Endothelial cell of umbilical vein (primary cell): ENCODE measurements at regions of chr5 and their contacts with region 1.

Region 1: DNA sequence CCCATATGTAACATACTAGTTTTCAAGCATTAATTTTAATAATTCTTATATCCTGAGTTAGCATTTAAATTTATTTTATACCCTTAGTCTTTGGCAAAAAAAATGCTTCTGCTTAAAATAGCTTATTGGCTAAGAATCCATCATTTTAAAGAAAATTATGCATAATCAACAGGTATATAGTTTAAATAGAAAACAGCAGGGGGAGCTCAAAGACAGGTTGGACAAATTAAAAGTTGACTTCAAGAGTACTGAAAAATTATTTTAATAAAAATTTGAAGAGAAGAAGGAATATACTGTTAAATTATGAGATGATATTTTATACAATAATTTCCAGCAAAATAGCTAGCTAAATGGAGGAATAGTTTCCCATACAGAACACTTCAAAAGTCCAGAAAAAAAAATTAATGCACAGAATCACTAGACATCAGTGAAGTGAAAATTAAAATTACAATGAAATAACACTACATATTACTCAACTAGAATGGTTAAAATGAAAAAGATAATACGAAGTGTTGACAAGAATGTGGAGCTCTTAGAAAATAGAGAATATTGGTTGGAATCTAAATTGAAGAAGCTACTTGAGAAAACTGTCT is 387.1 kb downstream of the PDE4D start:
- DNase-seq: peak; percentile 39
- H3K4me3 ChIP-seq: no peak overlapping the region
- H3K27ac ChIP-seq: no peak overlapping the region
- H3K4me1 ChIP-seq: no peaks in the 10 kb centered on the region
- H3K27me3 ChIP-seq: peaks cover 0 to 4% of the 10 kb centered on the region in 2 experiments
- CTCF ChIP-seq: peak; percentile 2 to 6
- POLR2A ChIP-seq: no peak

Region 2: DNA sequence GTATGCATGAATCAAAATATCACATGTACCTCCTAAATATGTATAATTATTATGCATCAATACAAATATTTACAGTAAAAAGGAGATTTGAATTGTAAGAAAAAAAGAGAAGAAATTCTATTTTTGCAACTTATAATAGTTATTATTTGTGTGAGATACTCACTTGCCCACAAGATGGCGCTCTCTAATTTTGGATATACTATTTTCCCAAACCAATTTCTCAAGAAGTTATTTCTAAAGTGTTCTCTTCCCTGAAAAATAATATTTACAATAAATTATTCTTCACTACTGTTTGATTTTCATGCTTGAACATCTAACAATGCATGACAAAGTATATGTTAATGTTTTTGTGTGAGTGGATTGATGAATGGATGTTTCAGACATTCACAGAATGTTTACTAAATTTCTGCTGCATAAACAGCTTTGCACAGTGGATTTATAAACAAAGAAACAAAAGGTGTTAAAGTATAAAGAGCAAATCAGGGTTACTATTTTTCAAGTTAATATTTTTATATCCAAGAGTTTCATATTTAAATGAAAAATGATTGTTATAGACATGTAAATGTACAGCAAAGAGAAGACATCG is 116.2 kb before region 1 on chr5:
- CTCF ChIA-PET with region 1: interaction called, 12 read pairs
- POLR2A ChIA-PET with region 1: no interaction called
- dilution Hi-C with region 1: no loop called
- intact Hi-C with region 1: no loop called
- DNase-seq: peak; percentile 40
- H3K4me3 ChIP-seq: no peak overlapping the region
- H3K27ac ChIP-seq: no peak overlapping the region
- H3K4me1 ChIP-seq: no peaks in the 10 kb centered on the region
- H3K27me3 ChIP-seq: no peaks in the 10 kb centered on the region
- CTCF ChIP-seq: peak; percentile 26 to 33
- POLR2A ChIP-seq: no peak

Region 3: DNA sequence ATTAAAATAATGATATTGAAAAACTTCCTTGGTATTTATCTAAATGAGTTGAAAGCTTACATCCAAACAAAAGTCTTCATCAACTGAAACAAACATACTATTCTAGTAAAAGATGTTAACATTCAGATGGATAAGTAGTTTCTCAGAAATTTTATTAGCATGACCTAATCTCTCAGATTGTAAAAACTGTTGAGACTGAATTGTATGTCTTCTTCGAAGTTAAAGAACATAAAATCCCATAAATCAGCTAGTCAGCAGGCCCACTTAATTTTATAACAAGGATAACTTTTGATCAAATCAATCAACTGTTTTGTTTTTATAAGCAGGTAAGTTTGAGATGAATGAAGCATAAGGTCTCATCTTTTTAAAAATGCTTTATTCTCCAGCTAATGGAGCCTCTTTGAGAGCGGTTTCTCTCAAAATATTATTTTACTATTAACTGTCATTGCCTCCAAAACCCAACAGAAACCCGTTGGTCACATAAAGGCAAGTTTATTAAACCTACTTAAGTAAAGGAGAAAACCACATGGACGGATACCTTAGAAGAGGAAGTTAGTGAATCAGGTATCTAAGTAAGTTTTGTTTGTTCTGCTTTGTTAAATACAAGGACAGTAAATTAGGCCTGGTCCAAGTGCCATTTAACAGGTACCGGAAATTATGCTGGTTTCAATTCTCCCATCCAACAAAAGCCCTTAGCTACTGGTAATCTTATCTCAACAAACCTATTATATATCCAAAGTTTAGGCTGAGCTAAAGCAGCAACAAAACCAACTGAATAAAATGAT is 69.8 kb before region 1 on chr5:
- CTCF ChIA-PET with region 1: no interaction called
- POLR2A ChIA-PET with region 1: no interaction called
- dilution Hi-C with region 1: no loop called
- intact Hi-C with region 1: no loop called
- DNase-seq: no peak
- H3K4me3 ChIP-seq: no peak overlapping the region
- H3K27ac ChIP-seq: no peak overlapping the region
- H3K4me1 ChIP-seq: no peaks in the 10 kb centered on the region
- H3K27me3 ChIP-seq: no peaks in the 10 kb centered on the region
- CTCF ChIP-seq: no peak
- POLR2A ChIP-seq: no peak

Region 4: GRCh38 chr5:59517926-59518585 is 11.7 kb after region 1 on chr5:
- CTCF ChIA-PET with region 1: interaction called, 29 read pairs
- POLR2A ChIA-PET with region 1: no interaction called
- dilution Hi-C with region 1: no loop called
- intact Hi-C with region 1: no loop called
- DNase-seq: peak; percentile 75
- H3K4me3 ChIP-seq: peak overlapping the region in 1 of 3 experiments; percentile 39
- H3K27ac ChIP-seq: peak overlapping the region; percentile 78
- H3K4me1 ChIP-seq: peaks cover 29% of the 10 kb centered on the region
- H3K27me3 ChIP-seq: no peaks in the 10 kb centered on the region
- CTCF ChIP-seq: no peak
- POLR2A ChIP-seq: no peak

Region 5: DNA sequence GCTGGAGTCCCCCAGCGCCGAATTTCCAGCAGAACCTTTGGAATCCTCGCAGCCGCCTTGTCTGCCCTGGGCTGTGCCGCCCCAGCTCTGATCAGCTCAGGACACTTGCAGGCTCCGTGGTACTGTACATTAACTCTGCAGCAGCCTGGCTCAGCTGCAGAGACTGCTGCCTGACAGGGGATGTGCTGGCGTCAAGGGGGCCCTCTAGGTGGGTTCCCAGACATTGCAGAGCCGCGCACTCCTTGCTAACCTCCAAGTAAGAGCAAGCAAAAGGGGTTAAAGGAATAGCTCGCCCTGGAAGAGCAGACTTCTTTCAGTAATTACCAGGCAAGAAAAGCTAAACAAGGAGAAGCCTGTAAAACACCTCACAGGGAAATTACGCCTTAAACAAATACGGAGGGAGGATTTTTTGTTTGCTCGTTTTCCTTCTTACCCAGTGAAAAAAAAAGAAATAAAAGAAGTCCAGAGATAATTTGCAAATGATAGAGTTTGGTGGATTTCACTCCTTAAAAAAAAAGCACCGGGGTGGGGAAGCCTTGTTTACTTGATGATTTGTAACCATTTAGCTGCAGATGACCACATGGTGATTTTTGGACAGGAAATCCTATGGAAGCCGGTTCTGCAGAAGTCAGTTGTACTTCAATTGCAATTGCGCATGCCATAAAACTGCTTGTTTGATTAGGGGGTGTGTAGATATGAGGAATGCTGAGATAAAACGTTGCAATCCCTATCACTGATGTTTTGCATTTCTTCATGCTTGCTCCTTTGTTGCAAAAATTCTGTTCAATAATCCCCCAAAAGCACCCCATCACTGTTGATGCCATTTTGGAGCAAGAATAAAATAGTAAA is 81.3 kb after region 1 on chr5:
- CTCF ChIA-PET with region 1: interaction called, 6 read pairs
- POLR2A ChIA-PET with region 1: no interaction called
- dilution Hi-C with region 1: no loop called
- intact Hi-C with region 1: loop called (anchors 5 kb)
- DNase-seq: peak; percentile 55
- H3K4me3 ChIP-seq: no peak overlapping the region
- H3K27ac ChIP-seq: no peak overlapping the region
- H3K4me1 ChIP-seq: peaks cover 20% of the 10 kb centered on the region
- H3K27me3 ChIP-seq: no peaks in the 10 kb centered on the region
- CTCF ChIP-seq: peak in 1 of 2 donors; percentile 29
- POLR2A ChIP-seq: no peak

Region 6: GRCh38 chr5:59660737-59661136 is 154.4 kb after region 1 on chr5:
- CTCF ChIA-PET with region 1: interaction called, 139 read pairs
- POLR2A ChIA-PET with region 1: no interaction called
- dilution Hi-C with region 1: no loop called
- intact Hi-C with region 1: loop called (anchors 1 kb)
- DNase-seq: peak; percentile 52
- H3K4me3 ChIP-seq: no peak overlapping the region
- H3K27ac ChIP-seq: no peak overlapping the region
- H3K4me1 ChIP-seq: peaks cover 21% of the 10 kb centered on the region
- H3K27me3 ChIP-seq: no peaks in the 10 kb centered on the region
- CTCF ChIP-seq: peak; percentile 22 to 27
- POLR2A ChIP-seq: no peak

Region 7: GRCh38 chr5:59673438-59674058 is 167.2 kb after region 1 on chr5:
- CTCF ChIA-PET with region 1: interaction called, 160 read pairs
- POLR2A ChIA-PET with region 1: no interaction called
- dilution Hi-C with region 1: no loop called
- intact Hi-C with region 1: loop called (anchors 1 kb)
- DNase-seq: peak; percentile 66
- H3K4me3 ChIP-seq: no peak overlapping the region
- H3K27ac ChIP-seq: no peak overlapping the region
- H3K4me1 ChIP-seq: no peaks in the 10 kb centered on the region
- H3K27me3 ChIP-seq: no peaks in the 10 kb centered on the region
- CTCF ChIP-seq: peak; percentile 38 to 46
- POLR2A ChIP-seq: no peak